PC-9 (cell line): ENCODE measurements at regions of chr2 and their contacts with region 1.

Region 1: DNA sequence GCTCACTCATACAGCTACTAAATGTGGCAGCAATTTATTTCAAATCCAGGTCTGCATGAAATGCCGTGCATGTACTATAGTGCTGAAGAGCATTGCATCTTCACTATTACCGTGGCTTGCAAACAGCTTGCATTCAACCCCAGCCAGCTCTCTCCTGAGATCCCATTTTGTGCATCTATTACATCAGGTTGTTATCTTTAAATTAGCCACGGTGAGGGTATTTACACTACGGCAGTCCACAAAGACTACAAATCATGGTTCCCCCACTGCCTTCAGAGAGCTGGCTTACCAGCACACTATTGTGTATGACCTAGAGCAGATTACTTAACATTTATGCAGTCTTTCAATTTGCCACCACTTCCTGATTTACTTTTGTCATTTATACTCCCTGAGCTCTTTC is 621.3 kb upstream of the LRATD1 start:
- DNase-seq: no peak
- H3K4me3 ChIP-seq: no peak overlapping the region
- H3K27ac ChIP-seq: no peak overlapping the region
- H3K4me1 ChIP-seq: no peaks in the 10 kb centered on the region
- H3K27me3 ChIP-seq: no peaks in the 10 kb centered on the region
- CTCF ChIP-seq: no peak

Region 2: GRCh38 chr2:13046557-13047165 is 964.5 kb before region 1 on chr2:
- CTCF ChIA-PET with region 1: no interaction called
- POLR2A ChIA-PET with region 1: interaction called, 17 read pairs
- intact Hi-C with region 1: no loop called
- DNase-seq: no peak
- H3K4me3 ChIP-seq: no peak overlapping the region
- H3K27ac ChIP-seq: no peak overlapping the region
- H3K4me1 ChIP-seq: peaks cover 12% of the 10 kb centered on the region
- H3K27me3 ChIP-seq: no peaks in the 10 kb centered on the region
- CTCF ChIP-seq: peak; percentile 76